SK-N-SH (cell line): ENCODE measurements at regions of chr17 and their contacts with region 1.

Region 1: GRCh38 chr17:50397111-50397918 is at the start of gene LRRC59:
- DNase-seq: peak; percentile 99
- H3K4me3 ChIP-seq: peak within 1 kb of the TSS; percentile 91 to 99
- H3K27ac ChIP-seq: peak within 1 kb of the TSS; percentile 74 to 83
- H3K4me1 ChIP-seq: peaks cover 10 to 23% of the 10 kb centered on the region in 2 experiments
- H3K27me3 ChIP-seq: no peaks in the 10 kb centered on the region; the same call in 1 of the 2 replicates
- CTCF ChIP-seq: peak; percentile 95
- EP300 ChIP-seq: no peak
- RAD21 ChIP-seq: peak; percentile 42; the same call in 1 of the 2 replicates
- polyA plus RNA-seq, gene LRRC59: 122 and 137 TPM in 2 replicates

Region 2: GRCh38 chr17:50318501-50319285 is 78.6 kb before region 1 on chr17:
- CTCF ChIA-PET with region 1: interaction called, 10 read pairs
- POLR2A ChIA-PET with region 1: no interaction called
- DNase-seq: no peak
- H3K4me3 ChIP-seq: no peak overlapping the region
- H3K27ac ChIP-seq: no peak overlapping the region
- H3K4me1 ChIP-seq: no peaks in the 10 kb centered on the region; a peak in 1 of 4 replicates
- H3K27me3 ChIP-seq: no peaks in the 10 kb centered on the region
- CTCF ChIP-seq: no peak
- EP300 ChIP-seq: no peak
- RAD21 ChIP-seq: no peak

Region 3: GRCh38 chr17:50372758-50373556 is 24.4 kb before region 1 on chr17 and contains the starts of genes EME1 and MRPL27:
- CTCF ChIA-PET with region 1: interaction called, 47 read pairs
- POLR2A ChIA-PET with region 1: interaction called, 3 read pairs
- DNase-seq: peak; percentile 92
- H3K4me3 ChIP-seq: peak within 1 kb of the TSS; percentile 81 to 94
- H3K27ac ChIP-seq: peak within 1 kb of the TSS; percentile 93 to 96
- H3K4me1 ChIP-seq: peaks cover 0 to 27% of the 10 kb centered on the region in 2 experiments; a peak in 2 of 4 replicates
- H3K27me3 ChIP-seq: no peaks in the 10 kb centered on the region
- CTCF ChIP-seq: no peak
- EP300 ChIP-seq: no peak
- RAD21 ChIP-seq: no peak
- polyA plus RNA-seq, gene EME1: 16.9 and 21.5 TPM in 2 replicates
- polyA plus RNA-seq, gene MRPL27: 266 and 337 TPM in 2 replicates

Region 4: GRCh38 chr17:50386510-50386909 is 10.8 kb before region 1 on chr17:
- CTCF ChIA-PET with region 1: interaction called, 27 read pairs
- POLR2A ChIA-PET with region 1: interaction called, 12 read pairs
- DNase-seq: no peak
- H3K4me3 ChIP-seq: no peak overlapping the region
- H3K27ac ChIP-seq: no peak overlapping the region
- H3K4me1 ChIP-seq: no peaks in the 10 kb centered on the region
- H3K27me3 ChIP-seq: no peaks in the 10 kb centered on the region
- CTCF ChIP-seq: no peak
- EP300 ChIP-seq: no peak
- RAD21 ChIP-seq: no peak

Region 5: DNA sequence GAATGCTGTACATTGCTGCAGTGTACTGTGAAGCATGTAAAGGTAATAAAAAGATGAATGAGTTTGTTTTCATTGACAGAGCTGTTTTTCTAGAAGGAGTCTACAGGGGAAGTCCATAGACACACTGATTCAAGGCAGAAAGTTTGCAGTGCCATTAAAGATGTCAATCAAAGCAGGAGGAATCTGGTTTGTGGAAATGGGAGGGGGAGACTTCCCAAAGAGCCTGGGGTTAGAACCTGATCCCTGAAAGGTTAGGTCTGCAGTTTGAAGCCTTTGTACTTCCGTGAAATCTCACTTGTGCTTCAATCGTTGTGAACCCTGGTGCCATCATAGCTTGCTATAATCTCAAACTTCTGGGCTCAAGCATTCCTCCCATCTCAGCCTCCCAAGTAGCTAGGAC is 33.9 kb after region 1 on chr17:
- CTCF ChIA-PET with region 1: interaction called, 33 read pairs
- POLR2A ChIA-PET with region 1: interaction called, 7 read pairs
- DNase-seq: no peak
- H3K4me3 ChIP-seq: no peak overlapping the region
- H3K27ac ChIP-seq: no peak overlapping the region
- H3K4me1 ChIP-seq: peaks cover 0 to 13% of the 10 kb centered on the region in 2 experiments; a peak in 1 of 4 replicates
- H3K27me3 ChIP-seq: no peaks in the 10 kb centered on the region
- CTCF ChIP-seq: no peak
- EP300 ChIP-seq: no peak
- RAD21 ChIP-seq: no peak

Region 6: GRCh38 chr17:50458701-50459676 is 61.7 kb after region 1 on chr17:
- CTCF ChIA-PET with region 1: interaction called, 11 read pairs
- POLR2A ChIA-PET with region 1: no interaction called
- DNase-seq: no peak
- H3K4me3 ChIP-seq: no peak overlapping the region
- H3K27ac ChIP-seq: no peak overlapping the region
- H3K4me1 ChIP-seq: no peaks in the 10 kb centered on the region
- H3K27me3 ChIP-seq: no peaks in the 10 kb centered on the region
- CTCF ChIP-seq: no peak
- EP300 ChIP-seq: no peak
- RAD21 ChIP-seq: no peak

Region 7: GRCh38 chr17:50478391-50479381 is 81.4 kb after region 1 on chr17 and contains the start of gene RSAD1:
- CTCF ChIA-PET with region 1: interaction called, 37 read pairs
- POLR2A ChIA-PET with region 1: interaction called, 10 read pairs
- DNase-seq: peak; percentile 98
- H3K4me3 ChIP-seq: peak within 1 kb of the TSS; percentile 80 to 90
- H3K27ac ChIP-seq: peak within 1 kb of the TSS; percentile 79 to 88
- H3K4me1 ChIP-seq: peaks cover 10 to 17% of the 10 kb centered on the region in 2 experiments; a peak in 2 of 4 replicates
- H3K27me3 ChIP-seq: no peaks in the 10 kb centered on the region
- CTCF ChIP-seq: peak; percentile 94
- EP300 ChIP-seq: peak; percentile 20 to 32; a peak in 2 of 4 replicates
- RAD21 ChIP-seq: peak; percentile 53
- polyA plus RNA-seq, gene RSAD1: 44.7 and 58.9 TPM in 2 replicates